ENCODE measurements at regions of chr20 and their contacts with region 1.

Region 1: DNA sequence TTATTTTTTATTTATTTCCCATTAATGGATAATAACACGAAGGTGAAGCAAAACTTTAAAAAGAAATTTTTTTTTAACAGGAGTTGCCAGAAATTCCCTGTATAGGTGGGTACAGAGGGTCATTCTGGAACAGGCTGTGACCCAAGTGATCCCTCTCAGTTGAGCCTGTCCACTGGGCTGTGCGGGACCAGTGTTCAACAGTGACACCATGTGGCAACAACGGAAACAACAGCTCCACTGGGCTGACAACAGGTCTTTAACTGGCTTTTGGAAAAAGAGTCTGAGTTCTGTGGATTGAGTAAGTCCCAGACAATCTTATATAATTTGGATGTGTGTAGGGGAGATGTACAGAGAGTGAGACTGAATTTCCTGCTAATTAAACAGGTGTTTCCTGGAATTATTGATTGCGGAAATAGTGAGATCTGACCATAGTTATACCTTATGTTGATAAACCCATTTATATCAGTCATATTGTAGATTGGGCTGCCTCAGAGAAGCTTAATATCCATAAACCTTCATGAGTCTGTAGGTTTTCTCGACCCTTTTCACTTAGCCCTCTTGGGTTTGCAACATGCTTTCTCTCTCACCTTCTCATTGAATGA is 17.6 kb downstream of the KIAA1755 start:
- DNase-seq: no peak
- H3K4me3 ChIP-seq: no peak overlapping the region
- H3K27ac ChIP-seq: no peak overlapping the region
- H3K4me1 ChIP-seq: peaks cover 21% of the 10 kb centered on the region
- H3K27me3 ChIP-seq: no peaks in the 10 kb centered on the region
- CTCF ChIP-seq: no peak
- POLR2A ChIP-seq: no peak

Region 2: GRCh38 chr20:38290832-38291581 is 48.1 kb after region 1 on chr20:
- intact Hi-C with region 1: loop called (anchors 10 kb)
- DNase-seq: no peak
- H3K4me3 ChIP-seq: no peak overlapping the region
- H3K27ac ChIP-seq: no peak overlapping the region
- H3K4me1 ChIP-seq: peaks cover 6% of the 10 kb centered on the region
- H3K27me3 ChIP-seq: no peaks in the 10 kb centered on the region
- CTCF ChIP-seq: peak in 1 of 3 experiments; percentile 18
- POLR2A ChIP-seq: no peak